ENCODE measurements at regions of chr3 and their contacts with region 1.

Region 1: GRCh38 chr3:148943506-148944205 is 47.7 kb upstream of the GYG1 start:
- DNase-seq: peak; percentile 70
- H3K4me3 ChIP-seq: no peak overlapping the region
- H3K27ac ChIP-seq: no peak overlapping the region
- H3K4me1 ChIP-seq: 0 out of 4 replicates have a peak, but pooled peaks cover 0 to 4% of the 10 kb centered on the region in 2 experiments
- H3K27me3 ChIP-seq: no peaks in the 10 kb centered on the region
- CTCF ChIP-seq: peak; percentile 81
- EP300 ChIP-seq: peak; percentile 24 to 29; a peak in 2 of 4 replicates
- RAD21 ChIP-seq: peak; percentile 95

Region 2: DNA sequence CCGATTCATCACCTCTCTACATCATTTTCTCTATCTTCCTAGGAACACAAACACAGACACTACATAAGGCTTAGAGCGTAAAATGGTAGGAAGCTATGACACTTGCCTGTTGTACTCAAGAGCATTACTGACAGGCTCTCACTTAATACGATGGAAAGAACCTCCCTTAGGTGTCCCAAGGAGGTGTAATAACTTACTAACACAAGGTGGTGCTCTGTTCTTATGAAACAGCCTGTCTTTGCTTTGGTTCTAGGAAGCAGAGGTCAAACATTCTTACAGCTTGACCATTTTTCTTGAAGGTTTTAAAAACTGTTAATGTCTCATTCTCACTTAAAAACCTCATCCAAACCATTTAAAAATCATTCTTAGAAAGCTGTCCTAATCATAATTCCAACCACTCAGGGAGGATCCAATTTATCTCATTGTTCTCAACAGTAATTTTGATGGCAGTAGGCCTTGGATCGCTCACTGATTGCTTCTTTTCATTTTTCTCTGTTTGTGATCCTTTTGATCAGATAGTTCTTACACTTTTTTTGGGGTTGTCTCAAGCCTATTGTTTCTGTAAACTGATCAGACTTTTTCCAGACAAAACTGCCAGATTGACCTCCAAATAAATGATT is 563.8 kb before region 1 on chr3:
- CTCF ChIA-PET with region 1: interaction called, 54 read pairs
- POLR2A ChIA-PET with region 1: no interaction called
- DNase-seq: peak; percentile 18
- H3K4me3 ChIP-seq: no peak overlapping the region; a peak in 1 of 4 replicates
- H3K27ac ChIP-seq: no peak overlapping the region
- H3K4me1 ChIP-seq: no peaks in the 10 kb centered on the region; a peak in 1 of 4 replicates
- H3K27me3 ChIP-seq: no peaks in the 10 kb centered on the region
- CTCF ChIP-seq: peak; percentile 65
- EP300 ChIP-seq: no peak
- RAD21 ChIP-seq: peak; percentile 86

Region 3: GRCh38 chr3:148718982-148719862 is 224.4 kb before region 1 on chr3:
- CTCF ChIA-PET with region 1: interaction called, 81 read pairs
- POLR2A ChIA-PET with region 1: no interaction called
- DNase-seq: no peak
- H3K4me3 ChIP-seq: no peak overlapping the region
- H3K27ac ChIP-seq: no peak overlapping the region
- H3K4me1 ChIP-seq: peaks cover 0 to 3% of the 10 kb centered on the region in 2 experiments; a peak in 2 of 4 replicates
- H3K27me3 ChIP-seq: no peaks in the 10 kb centered on the region
- CTCF ChIP-seq: peak; percentile 70
- EP300 ChIP-seq: no peak
- RAD21 ChIP-seq: peak; percentile 80

Region 4: GRCh38 chr3:148861277-148861869 is 82.3 kb before region 1 on chr3:
- CTCF ChIA-PET with region 1: interaction called, 93 read pairs
- POLR2A ChIA-PET with region 1: no interaction called
- DNase-seq: peak; percentile 39
- H3K4me3 ChIP-seq: no peak overlapping the region; a peak in 1 of 4 replicates
- H3K27ac ChIP-seq: no peak overlapping the region
- H3K4me1 ChIP-seq: no peaks in the 10 kb centered on the region
- H3K27me3 ChIP-seq: no peaks in the 10 kb centered on the region
- CTCF ChIP-seq: peak; percentile 81
- EP300 ChIP-seq: no peak
- RAD21 ChIP-seq: peak; percentile 80

Region 5: DNA sequence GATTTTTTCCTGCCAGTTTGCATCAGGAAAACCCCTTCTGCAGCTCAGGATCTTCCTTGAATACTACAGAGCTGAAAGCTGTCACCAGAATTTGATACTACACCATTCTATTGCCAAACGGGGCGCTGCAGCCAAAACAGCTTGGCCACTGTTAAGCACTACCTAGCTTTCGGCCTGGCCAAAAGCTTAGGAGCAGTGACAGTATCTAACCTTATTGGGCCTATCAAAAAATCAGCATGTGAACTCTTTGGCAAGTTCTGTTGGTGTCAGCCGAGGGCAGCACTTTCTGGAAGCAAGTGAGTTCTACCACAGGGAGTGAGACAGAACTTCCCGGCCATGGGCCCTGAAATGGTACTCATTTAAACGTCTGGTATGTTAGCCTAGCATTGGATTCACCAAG is 31.6 kb after region 1 on chr3:
- CTCF ChIA-PET with region 1: no interaction called
- POLR2A ChIA-PET with region 1: no interaction called
- DNase-seq: no peak
- H3K4me3 ChIP-seq: no peak overlapping the region
- H3K27ac ChIP-seq: no peak overlapping the region
- H3K4me1 ChIP-seq: no peaks in the 10 kb centered on the region
- H3K27me3 ChIP-seq: no peaks in the 10 kb centered on the region
- CTCF ChIP-seq: no peak
- EP300 ChIP-seq: no peak
- RAD21 ChIP-seq: no peak